ENCODE measurements at regions of chr3 and their contacts with region 1.

Region 1: DNA sequence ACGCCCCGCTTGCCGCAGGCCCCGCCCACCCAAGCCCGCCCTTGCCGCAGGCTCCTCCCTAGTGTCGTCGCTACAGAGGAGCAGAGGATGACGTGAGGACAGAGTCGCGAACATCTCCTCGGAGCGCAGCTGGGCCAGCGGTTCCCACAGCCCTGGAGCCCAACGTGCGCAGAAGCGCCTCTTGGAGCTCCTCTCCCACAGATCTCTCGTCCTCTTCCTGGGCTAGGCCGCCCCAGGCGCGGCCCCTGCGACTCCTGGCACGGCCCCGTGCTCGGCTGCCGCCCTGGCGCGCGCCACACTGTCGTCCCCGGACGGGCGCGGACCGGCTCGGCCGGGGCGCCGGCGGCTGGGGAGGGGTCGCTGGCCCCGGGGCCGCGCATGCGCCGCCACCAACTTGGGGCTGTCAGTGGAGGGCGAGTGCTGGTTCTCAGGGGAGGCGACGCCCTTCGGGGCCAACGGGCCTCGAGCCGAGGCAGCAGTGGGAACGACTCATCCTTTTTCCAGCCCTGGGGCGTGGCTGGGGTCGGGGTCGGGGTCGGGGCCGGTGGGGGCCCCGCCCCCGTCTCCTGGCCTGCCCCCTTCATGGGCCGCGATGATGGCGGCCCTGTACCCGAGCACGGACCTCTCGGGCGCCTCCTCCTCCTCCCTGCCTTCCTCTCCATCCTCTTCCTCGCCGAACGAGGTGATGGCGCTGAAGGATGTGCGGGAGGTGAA is at the start of gene TRPC1:
- DNase-seq: peak; percentile 87
- total RNA-seq, gene TRPC1: 18.7 TPM

Region 2: DNA sequence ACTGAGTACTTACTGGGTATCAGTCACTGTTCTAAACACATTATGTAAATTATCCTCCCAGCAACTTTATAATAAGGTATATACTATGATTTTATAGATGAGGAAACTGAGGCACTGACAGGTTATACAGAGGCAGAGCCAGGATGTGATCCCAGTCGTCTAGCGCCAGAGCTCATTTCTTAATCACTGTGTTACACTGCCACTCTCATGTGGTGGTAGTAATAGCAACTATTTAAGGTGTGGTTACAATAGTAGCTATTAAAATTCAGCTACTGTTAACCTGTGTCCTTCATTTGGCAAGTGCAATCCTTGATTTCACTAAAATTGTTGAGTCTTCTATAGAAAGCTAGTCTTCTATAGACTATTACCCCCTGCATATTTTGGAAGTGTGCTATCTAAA is 43.4 kb before region 1 on chr3:
- intact Hi-C with region 1: no loop called
- DNase-seq: no peak

Region 3: DNA sequence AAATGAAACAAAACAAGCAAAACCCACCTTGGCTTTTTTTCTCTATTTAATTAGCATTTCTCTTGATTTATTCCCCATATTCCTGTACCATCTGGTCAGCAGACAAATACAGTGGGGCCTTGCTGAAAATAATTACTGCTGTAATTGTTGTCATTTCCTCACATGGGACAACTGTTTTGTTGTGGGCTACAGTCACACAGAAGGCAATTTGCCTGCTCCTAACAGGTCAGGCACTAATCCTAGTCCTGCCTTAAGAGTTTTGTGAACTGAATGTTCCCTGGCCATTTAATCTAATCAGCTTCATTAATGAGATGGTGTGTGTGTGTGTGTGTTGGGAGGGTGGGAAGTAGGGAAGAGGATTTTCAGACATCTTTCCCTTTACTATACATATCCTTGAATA is 11.3 kb after region 1 on chr3:
- intact Hi-C with region 1: loop called (anchors 1 kb)
- DNase-seq: no peak

Region 4: GRCh38 chr3:143001369-143002082 is 277.4 kb after region 1 on chr3 and contains the start of gene U2SURP:
- intact Hi-C with region 1: loop called (anchors 10 kb)
- DNase-seq: peak; percentile 98
- total RNA-seq, gene U2SURP: 40.6 TPM

Region 5: DNA sequence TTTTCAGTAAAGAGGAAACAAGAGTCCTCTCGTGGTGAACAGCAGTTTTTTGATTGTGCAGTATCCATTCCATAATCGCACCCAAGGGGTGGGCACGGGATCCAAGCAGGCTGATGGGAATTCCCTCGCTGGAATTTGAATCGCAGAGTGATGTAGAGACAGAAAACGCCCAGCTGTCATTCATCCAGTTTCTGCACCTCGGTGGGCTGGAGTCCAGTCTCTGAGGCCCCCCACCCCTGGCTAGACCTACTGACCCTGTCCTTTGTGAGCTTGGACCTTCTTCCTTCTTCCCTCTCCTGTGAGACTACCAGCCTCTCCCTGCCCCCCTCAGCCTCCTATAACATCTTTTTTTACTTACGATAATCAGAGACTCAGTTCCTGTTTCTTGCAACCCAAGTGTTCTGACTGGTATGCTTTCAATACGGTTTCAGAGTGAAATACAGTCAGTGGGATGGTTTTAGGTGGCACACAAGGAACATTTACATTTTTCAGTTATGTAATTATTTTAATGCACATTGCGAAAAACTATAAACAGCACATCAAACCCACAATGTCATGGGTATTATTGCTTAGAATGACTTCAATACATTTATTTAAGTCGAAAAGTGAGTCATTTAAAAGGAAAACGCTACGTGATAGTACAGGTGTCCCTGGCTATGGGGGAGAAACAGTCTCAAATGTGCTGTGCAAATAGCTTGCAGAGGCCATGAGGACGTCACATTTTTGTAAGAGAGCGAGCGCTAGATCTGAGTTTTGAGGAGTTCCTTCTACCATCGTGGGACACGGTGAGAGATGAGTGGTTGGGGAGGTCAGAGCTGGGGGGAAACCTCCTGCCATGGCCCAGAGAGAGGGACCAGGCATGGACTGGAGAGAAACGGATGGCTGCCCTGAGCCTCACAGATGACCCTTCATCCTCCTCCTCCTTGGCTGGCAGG is 358.0 kb after region 1 on chr3:
- intact Hi-C with region 1: no loop called
- DNase-seq: no peak

Measured in cardiac septum (tissue), 1 donor.